ENCODE measurements at regions of chr6 and their contacts with region 1.

Region 1: GRCh38 chr6:125662296-125662695 is 87.1 kb upstream of the HEY2 start:
- DNase-seq: no peak
- ATAC-seq: no peak

Region 2: DNA sequence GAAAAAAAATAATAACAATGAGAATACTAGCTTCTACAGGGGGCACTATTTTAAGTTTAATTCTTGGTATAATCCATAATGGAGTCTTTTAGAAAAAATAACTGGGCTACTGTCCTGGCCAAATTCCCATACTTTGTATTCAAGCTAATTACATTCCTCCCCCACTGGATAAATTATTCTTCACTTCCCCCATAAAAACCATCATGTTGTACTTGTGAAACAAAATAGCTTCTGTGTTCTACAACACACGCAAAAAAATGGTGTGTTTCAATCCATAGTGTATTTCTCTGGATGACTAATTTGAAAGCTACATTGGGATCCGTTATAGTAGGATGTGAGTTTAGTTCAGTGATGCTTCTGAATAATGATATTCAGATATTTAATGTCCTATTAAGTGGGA is 338.9 kb before region 1 on chr6:
- intact Hi-C with region 1: loop called (anchors 5 kb)
- DNase-seq: no peak
- ATAC-seq: no peak

Region 3: GRCh38 chr6:125759184-125759902 is 97.0 kb after region 1 on chr6:
- intact Hi-C with region 1: no loop called
- DNase-seq: no peak
- ATAC-seq: peak; percentile 59

Region 4: GRCh38 chr6:125872259-125872921 is 210.1 kb after region 1 on chr6:
- intact Hi-C with region 1: no loop called
- DNase-seq: no peak
- ATAC-seq: no peak

Measured in Right ventricle myocardium inferior (tissue), 1 donor.